ENCODE measurements at regions of chr16 and their contacts with region 1.

Region 1: GRCh38 chr16:4734063-4734729 is at the starts of genes ANKS3 and DNAAF8:
- DNase-seq: peak; percentile 91 to 95 (median 94)
- H3K4me3 ChIP-seq: peak within 1 kb of the TSS; percentile 98
- H3K27ac ChIP-seq: peak within 1 kb of the TSS in 1 of 2 donors; percentile 65
- H3K4me1 ChIP-seq: peaks cover 2% of the 10 kb centered on the region
- H3K27me3 ChIP-seq: no peaks in the 10 kb centered on the region
- CTCF ChIP-seq: no peak
- EP300 ChIP-seq: no peak
- POLR2A ChIP-seq: peak; percentile 22
- total RNA-seq, gene ANKS3: 19.8 to 37.4 (median 32.3) TPM
- total RNA-seq, gene DNAAF8: 0.48 to 9.1 (median 1.5) TPM

Region 2: GRCh38 chr16:4693296-4693955 is 40.8 kb before region 1 on chr16 and contains the start of gene NUDT16L1:
- intact Hi-C with region 1: loop called in 1 of 4 experiments (anchors 5 kb)
- DNase-seq: peak; percentile 94 to 98 (median 96)
- H3K4me3 ChIP-seq: peak within 1 kb of the TSS; percentile 51
- H3K27ac ChIP-seq: peak within 1 kb of the TSS; percentile 40 to 60
- H3K4me1 ChIP-seq: peaks cover 5% of the 10 kb centered on the region
- H3K27me3 ChIP-seq: no peaks in the 10 kb centered on the region
- CTCF ChIP-seq: peak in 2 of 3 donors; percentile 54 to 66
- EP300 ChIP-seq: no peak
- POLR2A ChIP-seq: peak; percentile 37
- total RNA-seq, gene NUDT16L1: 19.4 to 33.1 (median 28.0) TPM

Region 3: GRCh38 chr16:4936991-4937781 is 203.0 kb after region 1 on chr16 and contains the start of gene PPL:
- intact Hi-C with region 1: no loop called
- DNase-seq: peak; percentile 56 to 76 (median 68)
- H3K4me3 ChIP-seq: peak within 1 kb of the TSS; percentile 47
- H3K27ac ChIP-seq: peak within 1 kb of the TSS in 1 of 2 donors; percentile 39
- H3K4me1 ChIP-seq: peaks cover under 1% of the 10 kb centered on the region
- H3K27me3 ChIP-seq: no peaks in the 10 kb centered on the region
- CTCF ChIP-seq: no peak
- EP300 ChIP-seq: no peak
- POLR2A ChIP-seq: no peak
- total RNA-seq, gene PPL: 6.9 to 37.8 (median 17.4) TPM

Measured in ovary (tissue), 10 donors.